AG04449 (cell line): ENCODE measurements at regions of chr4 and their contacts with region 1.

Region 1: DNA sequence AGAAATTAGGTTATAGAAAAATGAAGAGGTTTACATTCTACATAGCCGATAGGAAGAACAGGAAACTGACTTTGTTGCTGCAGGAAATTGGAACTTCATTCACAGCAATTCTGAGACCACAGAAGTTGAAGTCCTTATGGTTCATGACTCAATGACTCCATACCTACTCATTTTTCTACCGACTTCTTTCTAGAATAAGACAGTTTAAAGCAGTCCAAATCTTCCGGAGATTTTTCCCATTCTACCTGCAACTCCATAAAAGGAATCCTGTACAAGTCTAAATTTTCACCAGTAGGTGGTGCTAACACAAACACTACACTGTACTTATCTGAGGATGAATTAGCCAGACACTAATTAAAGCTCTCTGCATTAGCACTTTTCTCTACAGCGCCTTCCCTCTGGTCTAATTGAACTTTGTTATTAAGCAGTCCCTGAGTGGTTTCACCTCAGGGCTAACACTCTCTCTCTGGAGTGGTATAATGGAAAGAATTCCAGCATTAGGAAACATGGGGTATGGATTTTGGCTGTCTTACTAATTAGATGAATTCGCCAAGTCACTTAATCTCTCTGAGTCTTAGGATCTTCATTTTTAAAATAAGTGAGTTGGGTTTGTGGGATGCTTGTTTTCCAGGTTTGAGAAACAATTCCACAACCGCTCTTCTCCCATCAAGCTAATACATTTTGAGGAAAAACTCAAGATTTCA is 167.9 kb downstream of the SMIM20 start:
- DNase-seq: no peak
- H3K4me3 ChIP-seq: no peak overlapping the region
- CTCF ChIP-seq: peak; percentile 30

Region 2: DNA sequence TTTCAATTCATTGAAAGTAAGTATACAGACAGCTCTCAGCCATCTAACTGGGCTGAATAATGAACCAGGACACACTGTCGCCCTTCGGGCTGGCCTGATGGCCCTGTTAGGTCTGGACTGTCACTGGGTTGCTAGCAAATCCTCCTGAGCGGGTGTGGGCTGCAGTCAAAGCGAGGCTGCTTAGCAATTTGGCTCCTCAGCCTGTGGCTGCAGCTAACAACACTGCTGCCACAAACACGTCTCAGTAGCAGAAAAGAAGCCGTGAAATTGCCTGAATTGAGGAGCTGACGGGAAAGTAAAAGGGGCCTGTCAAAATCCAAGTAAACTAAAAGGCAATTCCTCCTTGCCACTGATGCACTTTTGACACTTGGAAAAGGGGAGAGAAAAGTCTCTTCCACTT is 95.1 kb before region 1 on chr4:
- CTCF ChIA-PET with region 1: interaction called, 20 read pairs
- POLR2A ChIA-PET with region 1: no interaction called
- DNase-seq: no peak
- H3K4me3 ChIP-seq: no peak overlapping the region
- CTCF ChIP-seq: no peak

Region 3: GRCh38 chr4:26058537-26058936 is 23.4 kb before region 1 on chr4:
- CTCF ChIA-PET with region 1: interaction called, 28 read pairs
- POLR2A ChIA-PET with region 1: no interaction called
- DNase-seq: no peak
- H3K4me3 ChIP-seq: no peak overlapping the region
- CTCF ChIP-seq: no peak

Region 4: GRCh38 chr4:26093551-26093950 is 11.6 kb after region 1 on chr4:
- CTCF ChIA-PET with region 1: interaction called, 35 read pairs
- POLR2A ChIA-PET with region 1: interaction called, 3 read pairs
- DNase-seq: no peak
- H3K4me3 ChIP-seq: no peak overlapping the region
- CTCF ChIP-seq: no peak

Region 5: DNA sequence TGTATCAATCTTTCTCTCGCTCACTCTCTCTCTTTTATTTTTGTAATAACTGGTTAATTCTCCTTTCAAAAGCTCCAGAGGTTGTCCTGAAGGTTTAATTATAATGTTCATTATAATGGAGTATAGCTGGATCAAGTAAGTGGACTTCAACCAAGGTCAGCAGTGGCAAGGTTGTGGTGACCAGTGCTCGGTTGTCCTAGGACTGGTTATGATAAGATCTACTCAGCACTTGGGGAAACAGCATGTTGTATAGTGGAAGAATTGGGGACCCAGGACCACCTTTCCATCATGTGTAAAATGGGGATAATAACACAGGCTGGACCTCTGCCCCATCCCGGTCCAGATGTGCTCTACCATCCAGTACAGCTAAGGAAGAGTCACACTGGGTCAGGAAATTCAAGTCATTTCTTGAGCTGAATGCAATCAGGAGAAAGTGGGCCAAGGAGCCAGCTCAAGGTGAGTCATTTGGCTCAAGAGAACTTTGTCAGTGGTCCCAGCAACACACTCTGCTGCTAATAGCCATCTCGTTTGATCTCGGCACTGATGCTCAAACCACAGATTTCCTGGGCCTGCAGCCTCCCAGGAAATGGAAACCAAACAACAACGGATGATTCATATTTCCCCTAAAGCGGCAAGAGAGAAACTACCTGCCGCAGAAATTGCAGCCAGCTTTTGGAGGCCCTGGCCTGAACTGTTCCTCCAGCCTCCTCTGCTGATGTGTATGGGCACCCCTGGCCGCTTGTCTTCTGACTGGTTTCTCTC is 115.3 kb after region 1 on chr4:
- CTCF ChIA-PET with region 1: interaction called, 23 read pairs
- POLR2A ChIA-PET with region 1: no interaction called
- DNase-seq: peak; percentile 36
- H3K4me3 ChIP-seq: no peak overlapping the region
- CTCF ChIP-seq: no peak

Region 6: GRCh38 chr4:26342328-26343037 is 260.5 kb after region 1 on chr4:
- CTCF ChIA-PET with region 1: interaction called, 10 read pairs
- POLR2A ChIA-PET with region 1: no interaction called
- DNase-seq: peak; percentile 70
- H3K4me3 ChIP-seq: no peak overlapping the region
- CTCF ChIP-seq: no peak

Region 7: GRCh38 chr4:26557164-26557563 is 475.2 kb after region 1 on chr4:
- CTCF ChIA-PET with region 1: no interaction called
- POLR2A ChIA-PET with region 1: no interaction called
- DNase-seq: peak; percentile 98
- H3K4me3 ChIP-seq: no peak overlapping the region
- CTCF ChIP-seq: no peak